IMR-90 (cell line): ENCODE measurements at regions of chr5 and their contacts with region 1.

Region 1: GRCh38 chr5:125393221-125393815 is 646.9 kb upstream of the ZNF608 start:
- DNase-seq: no peak
- ATAC-seq: no peak
- H3K4me3 ChIP-seq: no peak overlapping the region
- H3K27ac ChIP-seq: no peak overlapping the region
- H3K4me1 ChIP-seq: no peaks in the 10 kb centered on the region
- H3K27me3 ChIP-seq: no peaks in the 10 kb centered on the region
- CTCF ChIP-seq: no peak
- POLR2A ChIP-seq: no peak
- RAD21 ChIP-seq: no peak

Region 2: GRCh38 chr5:125367702-125368101 is 25.6 kb before region 1 on chr5:
- CTCF ChIA-PET with region 1: interaction called, 3 read pairs
- POLR2A ChIA-PET with region 1: no interaction called
- dilution Hi-C with region 1: no loop called
- in situ Hi-C with region 1: no loop called
- intact Hi-C with region 1: loop called (anchors 2 kb)
- DNase-seq: no peak
- ATAC-seq: no peak
- H3K4me3 ChIP-seq: no peak overlapping the region
- H3K27ac ChIP-seq: no peak overlapping the region
- H3K4me1 ChIP-seq: no peaks in the 10 kb centered on the region
- H3K27me3 ChIP-seq: no peaks in the 10 kb centered on the region
- CTCF ChIP-seq: no peak
- POLR2A ChIP-seq: no peak
- RAD21 ChIP-seq: no peak